ENCODE measurements at regions of chr2 and their contacts with region 1.

Region 1: GRCh38 chr2:148020111-148021058 is at the start of gene ORC4:
- DNase-seq: peak; percentile 99
- H3K4me3 Mint-ChIP-seq: peak within 1 kb of the TSS; percentile 100
- H3K27ac Mint-ChIP-seq: peak within 1 kb of the TSS; percentile 96
- H3K4me1 Mint-ChIP-seq: peaks cover 44% of the 10 kb centered on the region
- H3K27me3 Mint-ChIP-seq: no peaks in the 10 kb centered on the region
- total RNA-seq, gene ORC4: 35.9 to 38.8 TPM

Region 2: GRCh38 chr2:147636238-147636882 is 384.0 kb before region 1 on chr2:
- CTCF ChIA-PET with region 1: no interaction called
- intact Hi-C with region 1: loop called (anchors 5 kb)
- DNase-seq: no peak
- H3K4me3 Mint-ChIP-seq: no peak overlapping the region
- H3K27ac Mint-ChIP-seq: no peak overlapping the region
- H3K4me1 Mint-ChIP-seq: peaks cover 24% of the 10 kb centered on the region
- H3K27me3 Mint-ChIP-seq: no peaks in the 10 kb centered on the region

Region 3: DNA sequence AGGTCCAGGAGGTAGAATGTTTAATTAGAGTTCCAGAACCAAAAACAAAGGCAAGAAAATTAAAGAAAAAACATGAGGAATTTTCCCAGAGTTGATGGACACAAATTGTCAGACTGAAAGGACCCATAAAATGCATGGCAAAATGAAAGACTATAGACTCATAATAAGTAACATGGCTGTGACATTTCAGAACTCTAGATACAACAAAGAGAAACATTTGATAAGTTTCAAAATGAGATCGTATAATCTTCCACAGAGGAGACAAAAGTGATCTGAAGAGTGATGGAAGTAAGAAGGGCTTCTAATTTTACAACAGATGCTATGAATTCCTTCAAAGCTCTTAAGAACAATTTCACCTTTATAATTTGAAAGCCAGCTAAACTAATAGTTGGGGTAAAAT is 20.3 kb before region 1 on chr2:
- CTCF ChIA-PET with region 1: no interaction called
- intact Hi-C with region 1: loop called (anchors 2 kb)
- DNase-seq: no peak
- H3K4me3 Mint-ChIP-seq: no peak overlapping the region
- H3K27ac Mint-ChIP-seq: no peak overlapping the region
- H3K4me1 Mint-ChIP-seq: peaks cover 44% of the 10 kb centered on the region
- H3K27me3 Mint-ChIP-seq: no peaks in the 10 kb centered on the region

Region 4: GRCh38 chr2:148048475-148049221 is 28.3 kb after region 1 on chr2:
- CTCF ChIA-PET with region 1: no interaction called
- intact Hi-C with region 1: no loop called
- DNase-seq: no peak
- H3K4me3 Mint-ChIP-seq: no peak overlapping the region
- H3K27ac Mint-ChIP-seq: no peak overlapping the region
- H3K4me1 Mint-ChIP-seq: peaks cover 25% of the 10 kb centered on the region
- H3K27me3 Mint-ChIP-seq: no peaks in the 10 kb centered on the region

Region 5: GRCh38 chr2:148167855-148168254 is 147.5 kb after region 1 on chr2:
- CTCF ChIA-PET with region 1: no interaction called
- intact Hi-C with region 1: no loop called
- DNase-seq: no peak
- H3K4me3 Mint-ChIP-seq: no peak overlapping the region
- H3K27ac Mint-ChIP-seq: no peak overlapping the region
- H3K4me1 Mint-ChIP-seq: no peaks in the 10 kb centered on the region
- H3K27me3 Mint-ChIP-seq: no peaks in the 10 kb centered on the region

Region 6: DNA sequence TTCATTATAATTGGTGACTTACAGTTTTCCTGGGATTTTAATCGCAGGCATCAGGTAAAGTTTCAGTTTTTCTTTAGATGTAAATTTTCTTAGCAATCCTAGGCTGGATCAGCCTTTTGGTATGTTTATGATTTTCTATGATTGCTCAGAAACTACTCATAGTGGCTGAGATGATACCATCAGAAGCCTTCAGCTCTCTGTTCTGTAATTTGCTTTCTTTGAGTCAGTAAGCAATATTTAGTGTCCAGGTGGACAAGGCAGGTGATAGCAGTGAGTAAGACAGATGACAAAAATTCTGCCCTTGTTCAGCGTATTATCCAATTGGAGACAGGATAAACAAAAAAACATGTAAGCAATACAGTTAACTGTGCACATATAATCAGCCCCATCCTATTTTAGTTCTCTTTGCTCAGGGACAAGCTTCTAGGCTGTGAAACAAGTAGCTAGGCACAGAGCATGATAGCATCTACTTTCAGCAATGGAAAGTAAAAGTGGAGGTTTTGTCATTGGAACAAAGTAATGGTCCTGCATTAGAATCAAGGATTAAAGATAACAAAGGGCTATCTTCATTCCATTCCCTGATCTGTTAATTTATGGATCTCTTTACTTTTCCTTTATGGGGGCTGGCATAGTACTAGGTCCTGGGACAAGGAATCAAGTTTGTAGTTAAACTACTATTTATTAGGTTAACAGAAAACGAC is 724.9 kb after region 1 on chr2:
- CTCF ChIA-PET with region 1: no interaction called
- intact Hi-C with region 1: no loop called
- DNase-seq: no peak
- H3K4me3 Mint-ChIP-seq: no peak overlapping the region
- H3K27ac Mint-ChIP-seq: no peak overlapping the region
- H3K4me1 Mint-ChIP-seq: peaks cover 50% of the 10 kb centered on the region
- H3K27me3 Mint-ChIP-seq: no peaks in the 10 kb centered on the region

Region 7: DNA sequence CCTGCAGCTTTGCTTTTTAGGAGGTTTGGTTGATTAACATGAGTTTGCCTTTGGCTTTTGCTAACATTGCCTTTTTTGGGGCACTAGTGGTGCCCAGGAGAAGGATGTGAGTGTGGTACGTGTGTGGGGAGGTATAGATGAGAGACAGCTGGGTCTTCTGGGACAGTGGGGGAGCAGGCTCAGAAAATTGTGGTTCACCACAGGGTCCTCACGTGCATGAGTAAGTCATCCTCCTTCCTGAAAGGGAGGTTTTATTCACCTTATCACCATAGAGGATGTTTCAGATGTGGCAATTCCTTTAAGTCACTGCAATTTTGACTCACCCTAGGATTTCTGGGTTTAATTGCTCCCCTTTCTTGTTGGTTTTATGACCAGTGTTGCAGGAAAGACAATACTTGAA is 1147.0 kb after region 1 on chr2:
- CTCF ChIA-PET with region 1: no interaction called
- intact Hi-C with region 1: loop called (anchors 2 kb)
- DNase-seq: peak; percentile 77
- H3K4me3 Mint-ChIP-seq: no peak overlapping the region
- H3K27ac Mint-ChIP-seq: no peak overlapping the region
- H3K4me1 Mint-ChIP-seq: peaks cover 22% of the 10 kb centered on the region
- H3K27me3 Mint-ChIP-seq: peaks cover 31% of the 10 kb centered on the region